AG04450 (cell line): ENCODE measurements at regions of chr16 and their contacts with region 1.

Region 1: DNA sequence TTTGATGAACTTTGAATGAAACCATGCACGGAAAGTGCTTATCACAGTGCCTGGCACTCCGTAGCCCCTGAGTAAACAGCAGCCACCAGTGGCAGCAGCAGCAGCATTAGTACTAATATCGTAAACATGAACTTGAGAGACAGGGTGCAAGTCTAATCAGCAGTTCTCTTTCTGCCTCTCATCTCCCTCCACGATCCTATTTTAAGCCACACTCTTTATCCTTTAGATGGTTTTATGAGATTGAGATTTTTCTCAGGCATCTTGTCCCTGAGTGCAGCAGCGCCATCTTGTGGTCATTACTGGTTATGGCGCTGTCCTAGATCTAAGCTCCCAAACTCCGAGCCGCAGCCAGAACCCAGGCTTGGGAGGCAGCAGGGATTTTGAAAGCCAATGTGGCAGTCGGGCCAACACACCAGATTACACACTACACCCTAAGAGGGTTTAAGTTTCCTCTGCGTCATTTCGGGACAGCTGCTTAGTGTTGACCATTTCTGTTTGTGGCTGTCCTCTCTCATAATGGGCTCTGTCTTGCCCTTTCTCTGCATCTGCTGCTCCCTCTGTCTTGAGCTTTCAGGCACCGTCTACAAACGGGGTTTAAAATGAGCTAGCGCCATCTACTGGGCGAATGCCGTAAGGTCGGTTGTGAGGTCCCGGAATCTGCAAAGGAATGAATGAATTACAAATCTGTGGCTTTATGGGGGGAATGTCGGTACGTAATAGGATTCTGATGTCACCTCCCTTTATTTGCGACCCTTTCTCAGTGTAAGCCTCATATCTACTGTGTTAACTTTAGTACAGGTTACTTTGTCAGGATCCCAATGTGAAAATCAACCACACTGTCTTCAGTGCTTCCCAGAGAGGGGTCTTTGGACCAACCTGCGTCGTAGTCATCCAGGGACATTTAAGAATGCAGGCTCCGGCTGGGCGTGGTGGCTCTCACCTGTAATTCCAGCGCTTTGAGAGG is 64.5 kb downstream of the CYLD start:
- DNase-seq: peak; percentile 77
- H3K4me3 ChIP-seq: peak overlapping the region; percentile 60
- H3K27ac ChIP-seq: peak overlapping the region; percentile 48
- H3K27me3 ChIP-seq: no peaks in the 10 kb centered on the region
- CTCF ChIP-seq: peak; percentile 75

Region 2: DNA sequence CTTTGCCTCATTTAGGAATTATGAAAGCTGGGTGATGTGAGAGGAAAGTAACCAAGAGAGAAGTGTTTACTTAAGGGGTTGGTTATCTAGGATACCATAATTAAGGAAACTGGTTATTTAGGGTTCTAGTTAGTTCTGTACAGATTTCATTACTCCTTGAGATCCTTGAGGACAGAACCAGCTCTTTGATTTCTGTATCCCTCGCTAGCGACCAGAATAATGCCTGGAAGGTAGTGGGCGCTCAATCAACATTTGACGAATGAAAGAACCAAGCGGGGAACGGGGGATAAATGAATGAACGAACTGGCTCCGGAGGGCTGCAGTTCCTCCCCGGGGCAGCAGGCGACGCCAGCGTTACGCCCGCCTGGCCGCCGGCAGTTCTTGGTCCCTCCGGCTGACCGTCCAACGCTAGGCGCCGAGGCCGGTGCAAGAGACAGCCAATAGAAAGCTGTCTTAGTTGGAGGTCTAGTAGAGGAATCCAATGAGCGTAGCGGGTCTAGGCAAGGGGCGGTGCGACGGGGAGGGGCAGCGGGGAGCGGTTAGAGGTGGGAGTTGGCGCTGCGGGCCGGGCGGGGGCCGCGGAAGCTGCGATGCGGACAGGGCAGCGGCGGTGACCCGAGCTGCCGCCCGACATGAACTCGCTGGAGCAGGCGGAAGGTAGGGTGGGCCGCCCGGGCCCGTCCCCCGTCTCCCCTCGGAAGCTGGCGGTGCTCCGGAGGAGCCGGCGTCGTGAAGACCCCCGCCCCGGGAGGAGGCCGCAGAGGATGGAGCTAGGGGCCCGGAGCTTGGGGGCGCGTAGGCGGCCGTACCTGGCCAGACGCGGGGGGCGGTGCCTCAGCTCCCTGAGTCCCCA is 781.5 kb before region 1 on chr16 and contains the start of gene CNEP1R1:
- CTCF ChIA-PET with region 1: interaction called, 31 read pairs
- POLR2A ChIA-PET with region 1: no interaction called
- DNase-seq: peak; percentile 93
- H3K4me3 ChIP-seq: peak within 1 kb of the TSS; percentile 85
- H3K27ac ChIP-seq: no peak within 1 kb of the TSS
- H3K27me3 ChIP-seq: no peaks in the 10 kb centered on the region
- CTCF ChIP-seq: peak; percentile 100
- polyA plus RNA-seq, gene CNEP1R1: 22.4 and 33.0 TPM in 2 replicates

Region 3: DNA sequence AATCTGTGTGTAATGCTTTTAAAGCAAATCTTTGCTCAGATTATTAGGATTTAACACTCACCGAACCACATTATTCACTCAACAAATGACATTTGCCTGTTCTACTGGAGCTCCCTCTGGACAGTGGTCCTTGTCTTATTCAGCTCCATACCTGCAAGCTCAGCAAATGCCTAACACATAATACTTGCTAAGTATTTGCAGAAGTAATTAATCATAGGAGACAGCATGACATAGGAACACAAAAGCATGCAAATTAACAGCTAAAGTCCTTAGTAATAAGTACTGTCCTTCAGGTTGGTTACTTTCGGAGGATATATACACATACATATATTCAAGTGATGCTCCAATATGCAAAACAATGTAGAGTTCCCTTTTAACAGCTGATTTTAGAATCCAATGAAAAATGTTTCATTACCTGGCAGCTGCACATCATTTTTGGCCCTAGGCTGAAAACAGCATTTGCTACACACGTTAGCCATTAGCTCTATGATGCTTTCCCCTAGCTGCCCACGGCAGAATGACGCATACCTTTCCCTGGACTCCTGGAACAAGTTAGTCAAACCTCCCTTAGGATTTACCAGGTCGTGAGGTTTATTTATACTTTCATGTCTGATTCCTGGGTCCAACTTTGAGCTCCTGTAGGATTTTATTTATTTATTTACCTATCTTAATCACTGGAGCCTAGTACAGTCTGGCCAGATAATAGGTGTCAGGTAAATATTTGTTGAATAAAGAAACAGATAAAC is 446.2 kb before region 1 on chr16:
- CTCF ChIA-PET with region 1: interaction called, 25 read pairs
- POLR2A ChIA-PET with region 1: no interaction called
- DNase-seq: no peak
- H3K4me3 ChIP-seq: no peak overlapping the region
- H3K27ac ChIP-seq: no peak overlapping the region
- H3K27me3 ChIP-seq: no peaks in the 10 kb centered on the region
- CTCF ChIP-seq: no peak

Region 4: GRCh38 chr16:50671644-50672260 is 134.6 kb before region 1 on chr16:
- CTCF ChIA-PET with region 1: interaction called, 140 read pairs
- POLR2A ChIA-PET with region 1: no interaction called
- DNase-seq: no peak
- H3K4me3 ChIP-seq: no peak overlapping the region
- H3K27ac ChIP-seq: no peak overlapping the region
- H3K27me3 ChIP-seq: no peaks in the 10 kb centered on the region
- CTCF ChIP-seq: peak; percentile 52

Region 5: DNA sequence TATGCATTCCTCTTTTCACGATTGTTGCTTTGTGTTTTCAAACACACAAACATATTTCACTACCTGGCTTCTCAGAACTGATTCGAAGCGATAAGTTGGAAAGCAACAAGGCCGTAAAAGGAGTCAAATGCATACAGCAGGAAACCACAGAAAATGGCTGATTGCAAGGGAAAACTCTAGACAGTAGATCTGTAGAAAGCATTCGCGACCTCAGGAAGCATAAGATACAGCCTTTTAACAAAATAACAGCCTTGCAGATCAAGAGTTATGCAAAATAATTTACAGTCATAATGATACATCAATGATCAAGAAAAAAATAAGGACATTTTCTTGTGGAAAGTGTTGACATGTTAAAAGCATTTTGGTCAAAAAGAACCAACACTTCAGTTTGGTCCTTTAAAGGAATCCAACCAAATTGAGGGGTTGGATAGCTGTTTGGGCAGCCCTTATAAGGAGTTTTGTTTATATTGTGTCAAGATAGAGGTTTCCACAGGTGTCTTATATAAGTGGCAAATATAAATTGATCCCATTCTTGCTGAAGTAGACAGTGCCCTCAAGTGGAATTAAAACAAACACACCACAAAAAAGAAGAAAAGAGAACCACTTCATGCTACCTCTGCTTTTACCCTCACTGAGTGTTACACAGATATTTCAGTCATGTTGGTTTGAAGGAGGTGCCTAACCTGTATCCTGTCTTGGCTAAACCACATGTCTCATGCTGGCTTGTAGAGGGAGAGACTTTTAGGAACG is 59.0 kb before region 1 on chr16:
- CTCF ChIA-PET with region 1: interaction called, 43 read pairs
- POLR2A ChIA-PET with region 1: no interaction called
- DNase-seq: no peak
- H3K4me3 ChIP-seq: no peak overlapping the region
- H3K27ac ChIP-seq: no peak overlapping the region
- H3K27me3 ChIP-seq: no peaks in the 10 kb centered on the region
- CTCF ChIP-seq: peak; percentile 26; the same call in 1 of the 2 replicates

Region 6: GRCh38 chr16:50791522-50791921 is 14.9 kb before region 1 on chr16:
- CTCF ChIA-PET with region 1: interaction called, 102 read pairs
- POLR2A ChIA-PET with region 1: no interaction called
- DNase-seq: no peak
- H3K4me3 ChIP-seq: no peak overlapping the region
- H3K27ac ChIP-seq: no peak overlapping the region
- H3K27me3 ChIP-seq: no peaks in the 10 kb centered on the region
- CTCF ChIP-seq: no peak

Region 7: DNA sequence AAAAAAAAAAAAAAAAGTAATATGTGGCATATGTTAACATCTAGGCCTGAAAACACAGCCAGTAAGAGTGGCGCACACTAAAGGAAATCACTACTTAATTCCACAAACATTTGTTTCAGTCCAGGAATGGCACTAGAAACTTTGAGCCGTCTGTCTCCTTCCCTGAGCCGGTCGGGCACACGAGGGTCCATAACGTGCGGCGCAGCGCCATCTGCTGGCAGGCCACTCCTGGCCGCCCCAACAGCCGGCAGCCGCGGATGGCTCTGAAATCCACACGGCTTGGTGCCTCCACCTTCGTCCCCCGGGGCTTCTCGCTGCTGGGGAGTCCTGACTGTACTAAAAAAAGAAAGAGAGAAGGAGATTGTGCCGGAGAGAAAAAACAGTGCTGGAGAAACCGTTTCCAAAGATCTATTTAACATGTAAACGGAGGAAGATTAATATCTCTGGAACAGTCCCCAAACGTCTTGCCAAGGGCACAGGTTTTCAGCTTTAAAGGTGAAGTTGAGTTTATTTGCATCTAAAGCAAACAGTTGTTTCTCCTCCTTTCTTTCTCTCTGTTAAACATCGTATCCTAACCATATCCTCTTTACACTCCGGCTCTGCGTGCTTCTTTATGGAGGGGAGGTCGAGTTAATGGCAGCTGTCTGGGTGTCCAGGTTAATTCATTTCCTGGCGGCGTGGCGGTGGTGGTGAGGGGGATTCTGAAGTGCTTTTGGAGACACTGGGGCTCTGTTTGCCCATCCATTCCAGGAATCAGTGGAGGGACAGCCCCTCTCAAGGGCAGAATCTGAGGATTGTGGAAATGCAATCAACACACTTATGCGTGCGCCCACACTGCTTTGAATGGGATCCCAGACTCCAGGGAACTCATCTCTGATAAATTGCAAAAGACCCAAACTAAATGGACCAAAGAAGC is 956.0 kb after region 1 on chr16:
- CTCF ChIA-PET with region 1: interaction called, 10 read pairs
- POLR2A ChIA-PET with region 1: no interaction called
- DNase-seq: peak; percentile 53
- H3K4me3 ChIP-seq: no peak overlapping the region; the same call in 1 of the 2 replicates
- H3K27ac ChIP-seq: no peak overlapping the region
- H3K27me3 ChIP-seq: no peaks in the 10 kb centered on the region
- CTCF ChIP-seq: peak; percentile 96